ENCODE measurements at regions of chr11 and their contacts with region 1.

Region 1: GRCh38 chr11:35822815-35823495 is 120.9 kb upstream of the LDLRAD3 start:
- DNase-seq: no peak
- H3K4me3 ChIP-seq: no peak overlapping the region
- CTCF ChIP-seq: no peak

Region 2: GRCh38 chr11:35617687-35618496 is 205.1 kb before region 1 on chr11 and contains the start of gene FJX1:
- CTCF ChIA-PET with region 1: interaction called, 24 read pairs
- POLR2A ChIA-PET with region 1: no interaction called
- DNase-seq: no peak
- H3K4me3 ChIP-seq: peak within 1 kb of the TSS; percentile 69
- CTCF ChIP-seq: no peak

Region 3: GRCh38 chr11:35655856-35656255 is 167.1 kb before region 1 on chr11:
- CTCF ChIA-PET with region 1: no interaction called
- POLR2A ChIA-PET with region 1: no interaction called
- DNase-seq: no peak
- H3K4me3 ChIP-seq: no peak overlapping the region
- CTCF ChIP-seq: no peak

Region 4: GRCh38 chr11:35761899-35762298 is 61.1 kb before region 1 on chr11:
- CTCF ChIA-PET with region 1: interaction called, 10 read pairs
- POLR2A ChIA-PET with region 1: no interaction called
- DNase-seq: no peak
- H3K4me3 ChIP-seq: no peak overlapping the region
- CTCF ChIP-seq: no peak

Region 5: GRCh38 chr11:35847473-35847872 is 24.5 kb after region 1 on chr11:
- CTCF ChIA-PET with region 1: interaction called, 14 read pairs
- POLR2A ChIA-PET with region 1: no interaction called
- DNase-seq: no peak
- H3K4me3 ChIP-seq: no peak overlapping the region
- CTCF ChIP-seq: no peak

Region 6: GRCh38 chr11:36041988-36042611 is 219.1 kb after region 1 on chr11:
- CTCF ChIA-PET with region 1: interaction called, 19 read pairs
- POLR2A ChIA-PET with region 1: no interaction called
- DNase-seq: no peak
- H3K4me3 ChIP-seq: no peak overlapping the region
- CTCF ChIP-seq: peak; percentile 59

Region 7: DNA sequence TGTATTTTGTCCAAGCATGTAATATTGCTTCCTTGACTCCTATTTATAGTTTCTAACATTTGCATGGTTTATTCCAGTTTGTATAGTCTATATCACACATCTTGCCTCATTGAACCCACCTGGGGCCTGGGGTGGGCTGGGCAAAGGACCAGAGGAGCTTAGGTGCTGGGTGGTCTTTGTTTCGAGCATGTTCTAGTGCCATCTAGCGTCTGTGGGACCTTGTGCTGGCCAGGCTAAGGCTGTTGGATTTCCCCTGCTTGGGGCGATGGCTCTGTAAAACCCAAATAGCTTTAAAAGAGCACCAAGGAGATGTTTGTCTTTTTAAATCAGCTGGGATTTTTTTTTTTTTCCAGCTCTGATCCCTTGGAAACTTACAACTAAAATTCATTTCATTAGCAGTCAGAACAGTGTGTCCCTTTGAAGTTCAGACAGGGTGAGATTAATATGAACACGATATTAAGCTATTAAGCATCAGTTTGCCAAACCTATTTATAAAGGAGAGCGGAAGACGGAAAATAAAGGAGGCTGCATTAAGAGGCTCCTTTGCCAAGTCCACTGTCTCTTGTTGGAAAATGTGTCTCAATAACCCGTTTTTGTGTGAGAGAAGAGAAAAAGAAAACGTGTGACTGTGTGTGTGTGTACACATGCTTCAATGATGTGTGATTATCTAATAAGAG is 308.9 kb after region 1 on chr11:
- CTCF ChIA-PET with region 1: interaction called, 60 read pairs
- POLR2A ChIA-PET with region 1: no interaction called
- DNase-seq: no peak
- H3K4me3 ChIP-seq: no peak overlapping the region
- CTCF ChIP-seq: peak; percentile 76

Region 8: DNA sequence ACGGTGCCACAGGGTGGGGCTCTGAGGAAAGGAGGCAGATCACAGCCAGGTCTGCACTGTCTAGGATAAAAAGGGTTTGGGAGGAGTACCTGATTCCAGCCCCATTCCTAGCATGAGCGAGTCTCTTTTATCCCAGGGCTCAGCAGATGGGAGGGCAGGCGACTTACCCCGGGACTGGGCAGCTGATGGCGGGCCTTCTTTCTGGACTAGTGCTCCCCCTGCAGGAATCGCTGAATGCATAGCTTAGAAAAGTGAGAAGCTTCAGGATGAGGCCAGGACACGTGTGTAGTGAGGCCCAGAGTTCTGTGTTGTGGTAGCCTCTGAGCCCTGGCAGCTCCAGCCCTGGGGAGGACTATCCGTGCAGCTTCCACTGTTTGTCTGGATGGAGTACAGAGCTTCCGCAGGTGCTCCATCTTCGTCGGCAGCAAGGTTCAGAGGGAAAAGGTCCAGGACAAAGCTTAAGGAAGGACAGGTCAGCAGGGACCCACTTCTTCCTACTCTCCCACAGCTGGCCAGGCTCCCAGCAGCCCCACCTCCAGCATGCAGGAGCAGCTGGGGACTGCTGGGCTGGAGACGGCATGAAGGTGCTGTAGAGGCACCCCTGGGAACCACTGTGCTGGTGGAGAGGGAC is 435.9 kb after region 1 on chr11:
- CTCF ChIA-PET with region 1: interaction called, 101 read pairs
- POLR2A ChIA-PET with region 1: interaction called, 3 read pairs
- DNase-seq: peak; percentile 36
- H3K4me3 ChIP-seq: no peak overlapping the region
- CTCF ChIP-seq: peak; percentile 76